CD8-positive, alpha-beta T cell (primary cell): ENCODE measurements at regions of chr17 and their contacts with region 1.

Region 1: GRCh38 chr17:59565171-59565969 is at the start of gene DHX40:
- DNase-seq: peak; percentile 86 to 99 (median 95)
- ATAC-seq: peak; percentile 89
- H3K4me3 ChIP-seq: peak within 1 kb of the TSS; percentile 94 to 100
- H3K4me3 Mint-ChIP-seq: peak within 1 kb of the TSS; percentile 100
- H3K27ac ChIP-seq: peak within 1 kb of the TSS; percentile 89 to 97
- H3K27ac Mint-ChIP-seq: peak within 1 kb of the TSS; percentile 100
- H3K4me1 ChIP-seq: peaks cover 17% of the 10 kb centered on the region
- H3K4me1 Mint-ChIP-seq: peaks cover 23% of the 10 kb centered on the region
- H3K27me3 ChIP-seq: no peaks in the 10 kb centered on the region
- H3K27me3 Mint-ChIP-seq: no peaks in the 10 kb centered on the region
- CTCF ChIP-seq: no peak
- total RNA-seq, gene DHX40: 72.7 to 72.8 TPM

Region 2: GRCh38 chr17:58631523-58632323 is 933.6 kb before region 1 on chr17:
- CTCF ChIA-PET with region 1: no interaction called
- POLR2A ChIA-PET with region 1: no interaction called
- intact Hi-C with region 1: loop called (anchors 5 to 10 kb)
- DNase-seq: peak; percentile 84 to 97 (median 91)
- ATAC-seq: peak; percentile 88
- H3K4me3 ChIP-seq: peak overlapping the region; percentile 48 to 50
- H3K4me3 Mint-ChIP-seq: no peak overlapping the region
- H3K27ac ChIP-seq: peak overlapping the region; percentile 95 to 97
- H3K27ac Mint-ChIP-seq: no peak overlapping the region
- H3K4me1 ChIP-seq: peaks cover 13% of the 10 kb centered on the region
- H3K4me1 Mint-ChIP-seq: peaks cover 2% of the 10 kb centered on the region
- H3K27me3 ChIP-seq: no peaks in the 10 kb centered on the region
- H3K27me3 Mint-ChIP-seq: no peaks in the 10 kb centered on the region
- CTCF ChIP-seq: no peak

Region 3: DNA sequence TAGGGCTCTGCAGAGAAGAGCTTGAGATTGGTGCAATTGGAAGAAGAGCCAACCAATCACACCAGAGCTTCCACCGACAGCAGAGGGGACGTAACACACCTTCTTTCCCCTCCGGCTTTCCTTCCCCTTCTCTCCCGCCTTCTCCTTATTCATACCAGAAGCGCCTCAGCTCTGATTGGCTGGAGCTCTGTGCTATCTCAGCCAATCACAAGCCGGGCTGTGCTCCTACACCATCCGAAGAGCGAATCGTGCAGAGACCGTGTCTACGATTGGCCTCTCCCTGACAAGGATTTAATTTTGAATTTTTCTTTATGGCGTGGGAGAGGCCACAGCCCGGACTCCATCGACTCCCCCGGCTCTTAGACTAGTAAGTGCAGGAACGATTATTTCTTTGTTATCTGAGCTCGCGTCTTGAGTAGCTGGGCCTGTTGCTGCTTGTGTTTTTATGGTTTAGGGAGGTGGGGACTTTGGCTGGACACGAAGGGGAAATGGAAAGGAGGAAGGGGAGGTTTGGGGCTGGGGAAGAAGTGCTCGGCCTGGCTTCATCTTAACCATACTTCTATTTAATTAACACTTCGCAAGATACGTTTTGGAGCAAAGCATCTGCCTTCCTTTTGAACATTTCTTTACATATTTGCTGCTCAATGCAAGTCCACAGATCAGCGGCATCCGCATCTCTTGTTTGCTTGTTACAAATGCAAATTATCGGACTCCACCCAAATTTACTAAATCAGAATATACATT is 409.8 kb before region 1 on chr17 and contains the start of gene PRR11:
- CTCF ChIA-PET with region 1: no interaction called
- POLR2A ChIA-PET with region 1: interaction called, 4 read pairs
- intact Hi-C with region 1: loop called in 1 of 2 experiments (anchors 5 kb)
- DNase-seq: peak; percentile 82 to 99 (median 90)
- ATAC-seq: peak; percentile 85
- H3K4me3 ChIP-seq: peak within 1 kb of the TSS; percentile 95 to 97
- H3K4me3 Mint-ChIP-seq: no peak within 1 kb of the TSS
- H3K27ac ChIP-seq: peak within 1 kb of the TSS; percentile 62 to 74
- H3K27ac Mint-ChIP-seq: no peak within 1 kb of the TSS
- H3K4me1 ChIP-seq: peaks cover 15% of the 10 kb centered on the region
- H3K4me1 Mint-ChIP-seq: peaks cover 28% of the 10 kb centered on the region
- H3K27me3 ChIP-seq: no peaks in the 10 kb centered on the region
- H3K27me3 Mint-ChIP-seq: no peaks in the 10 kb centered on the region
- CTCF ChIP-seq: no peak
- total RNA-seq, gene PRR11: 0.30 to 0.69 TPM

Region 4: GRCh38 chr17:59311130-59311920 is 254.0 kb before region 1 on chr17:
- CTCF ChIA-PET with region 1: no interaction called
- POLR2A ChIA-PET with region 1: no interaction called
- intact Hi-C with region 1: loop called in 1 of 2 experiments (anchors 5 kb)
- DNase-seq: peak in 6 of 9 experiments; percentile 16 to 77 (median 42)
- ATAC-seq: peak; percentile 99
- H3K4me3 ChIP-seq: no peak overlapping the region
- H3K4me3 Mint-ChIP-seq: no peak overlapping the region
- H3K27ac ChIP-seq: no peak overlapping the region
- H3K27ac Mint-ChIP-seq: no peak overlapping the region
- H3K4me1 ChIP-seq: no peaks in the 10 kb centered on the region
- H3K4me1 Mint-ChIP-seq: no peaks in the 10 kb centered on the region
- H3K27me3 ChIP-seq: no peaks in the 10 kb centered on the region
- H3K27me3 Mint-ChIP-seq: no peaks in the 10 kb centered on the region
- CTCF ChIP-seq: peak; percentile 76

Region 5: DNA sequence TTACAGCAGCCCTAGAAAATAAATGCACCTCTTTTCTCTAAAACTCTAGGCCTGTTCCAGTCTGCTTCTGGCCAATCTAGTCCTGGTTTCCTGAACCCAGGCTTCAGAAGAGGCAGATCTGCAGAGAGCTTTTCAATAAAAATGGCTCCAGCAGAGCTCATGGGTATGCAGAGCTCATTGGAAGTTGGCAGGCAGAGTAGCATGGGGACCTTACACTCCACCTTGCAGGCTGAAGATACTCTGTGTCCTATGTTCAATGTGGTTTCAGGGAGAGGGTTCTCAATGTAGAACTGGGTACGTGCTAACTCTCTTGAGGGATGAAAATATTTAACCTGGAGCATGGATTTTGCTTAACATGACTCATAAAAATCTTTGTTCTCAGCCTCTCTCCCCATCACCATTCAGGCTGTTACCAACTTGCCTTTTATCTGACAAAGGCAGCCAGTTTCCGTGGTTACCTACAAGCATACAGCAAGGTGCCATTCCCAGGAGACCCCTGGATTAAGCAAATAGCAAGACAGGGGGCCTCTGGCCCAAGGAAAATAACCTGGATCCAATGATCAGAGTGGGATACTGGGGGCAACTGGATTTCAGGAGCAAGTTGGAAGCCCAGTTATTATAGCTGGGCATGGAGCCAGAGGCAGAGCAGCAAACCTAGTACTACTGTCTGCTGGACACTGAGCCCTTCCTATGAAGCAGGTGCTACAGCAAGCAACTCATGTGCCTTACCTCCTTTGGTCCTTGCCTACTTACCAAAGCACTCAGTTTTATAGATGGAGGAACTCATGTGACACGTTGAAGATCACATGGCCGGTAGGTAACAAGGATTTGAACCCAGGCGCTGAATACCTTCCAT is 98.2 kb before region 1 on chr17:
- CTCF ChIA-PET with region 1: no interaction called
- POLR2A ChIA-PET with region 1: no interaction called
- intact Hi-C with region 1: no loop called
- DNase-seq: no peak
- ATAC-seq: no peak
- H3K4me3 ChIP-seq: no peak overlapping the region
- H3K4me3 Mint-ChIP-seq: no peak overlapping the region
- H3K27ac ChIP-seq: no peak overlapping the region
- H3K27ac Mint-ChIP-seq: no peak overlapping the region
- H3K4me1 ChIP-seq: peaks cover 6% of the 10 kb centered on the region
- H3K4me1 Mint-ChIP-seq: peaks cover 15% of the 10 kb centered on the region
- H3K27me3 ChIP-seq: no peaks in the 10 kb centered on the region
- H3K27me3 Mint-ChIP-seq: no peaks in the 10 kb centered on the region
- CTCF ChIP-seq: no peak

Region 6: GRCh38 chr17:59521204-59522126 is 43.9 kb before region 1 on chr17:
- CTCF ChIA-PET with region 1: interaction called, 4 read pairs
- POLR2A ChIA-PET with region 1: no interaction called
- intact Hi-C with region 1: loop called in 1 of 2 experiments (anchors 5 kb)
- DNase-seq: peak; percentile 22 to 76 (median 57)
- ATAC-seq: peak; percentile 74
- H3K4me3 ChIP-seq: no peak overlapping the region
- H3K4me3 Mint-ChIP-seq: no peak overlapping the region
- H3K27ac ChIP-seq: no peak overlapping the region
- H3K27ac Mint-ChIP-seq: no peak overlapping the region
- H3K4me1 ChIP-seq: no peaks in the 10 kb centered on the region
- H3K4me1 Mint-ChIP-seq: peaks cover 4% of the 10 kb centered on the region
- H3K27me3 ChIP-seq: no peaks in the 10 kb centered on the region
- H3K27me3 Mint-ChIP-seq: peaks cover 11% of the 10 kb centered on the region
- CTCF ChIP-seq: peak; percentile 94

Region 7: DNA sequence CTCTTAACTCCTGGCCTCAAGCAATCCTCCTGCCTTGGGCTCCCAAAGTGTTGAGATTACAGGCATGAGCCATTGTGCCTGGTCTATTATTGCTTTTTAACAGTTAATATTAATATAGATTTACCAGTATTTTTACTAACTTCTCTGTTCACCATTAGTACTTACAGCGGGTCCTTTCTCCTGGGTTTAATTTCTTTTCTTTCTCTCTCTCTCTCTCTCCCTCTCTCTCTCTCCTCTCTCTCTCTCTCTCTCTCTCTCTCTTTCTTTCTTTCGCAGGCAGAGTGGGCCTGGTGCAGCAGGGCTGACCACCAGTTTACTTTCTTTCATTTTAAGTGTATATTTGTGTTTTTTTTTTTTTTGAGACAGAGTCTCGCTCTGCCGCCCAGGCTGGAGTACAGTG is 14.7 kb before region 1 on chr17:
- CTCF ChIA-PET with region 1: no interaction called
- POLR2A ChIA-PET with region 1: no interaction called
- intact Hi-C with region 1: no loop called
- DNase-seq: no peak
- ATAC-seq: no peak
- H3K4me3 ChIP-seq: no peak overlapping the region
- H3K4me3 Mint-ChIP-seq: no peak overlapping the region
- H3K27ac ChIP-seq: no peak overlapping the region
- H3K27ac Mint-ChIP-seq: no peak overlapping the region
- H3K4me1 ChIP-seq: no peaks in the 10 kb centered on the region
- H3K4me1 Mint-ChIP-seq: no peaks in the 10 kb centered on the region
- H3K27me3 ChIP-seq: peaks cover 0 to 4% of the 10 kb centered on the region in 2 experiments
- H3K27me3 Mint-ChIP-seq: peaks cover 5% of the 10 kb centered on the region
- CTCF ChIP-seq: no peak

Region 8: DNA sequence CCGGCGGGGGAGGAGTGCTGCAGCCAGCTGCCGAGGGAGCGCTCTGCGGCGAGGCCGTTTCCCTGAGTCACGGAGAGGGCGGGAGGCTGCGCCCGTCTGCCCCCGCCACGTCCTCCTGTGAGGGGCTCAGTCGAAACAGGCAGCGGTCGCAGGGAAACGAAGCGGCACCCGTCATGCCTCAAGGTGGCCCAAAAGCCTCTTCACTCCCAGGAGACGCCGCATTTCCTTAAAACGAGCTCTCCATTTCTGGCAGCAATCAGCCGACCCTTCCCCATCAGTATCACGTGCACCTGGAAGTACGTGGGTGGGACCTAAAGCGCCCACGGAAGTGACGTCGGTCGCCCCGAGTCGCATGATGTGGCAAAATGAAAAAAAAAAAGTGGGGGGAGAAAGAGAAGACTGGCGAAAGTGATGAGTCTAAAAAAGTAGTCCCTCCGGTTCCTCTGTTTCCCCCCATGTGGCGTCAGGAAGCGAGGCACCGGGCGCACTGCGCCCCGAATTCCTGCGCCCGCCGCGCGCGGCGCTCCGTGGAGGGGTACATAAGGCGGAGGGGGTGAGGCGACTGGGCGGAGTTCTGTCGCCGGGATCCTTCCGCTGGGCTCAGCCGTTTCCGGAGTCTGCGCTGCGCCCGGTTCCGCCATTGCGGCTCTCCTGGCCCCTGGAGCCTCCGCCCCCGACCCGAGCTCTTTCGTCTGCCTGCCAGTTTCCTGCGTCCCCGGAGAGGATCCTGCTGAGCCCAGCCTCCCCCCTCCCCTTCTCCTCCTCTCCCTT is 54.1 kb after region 1 on chr17 and contains the start of gene CLTC:
- CTCF ChIA-PET with region 1: no interaction called
- POLR2A ChIA-PET with region 1: interaction called, 22 read pairs
- intact Hi-C with region 1: loop called (anchors 1 to 2 kb)
- DNase-seq: peak; percentile 83 to 98 (median 90)
- ATAC-seq: peak; percentile 82
- H3K4me3 ChIP-seq: peak within 1 kb of the TSS; percentile 98 to 99
- H3K4me3 Mint-ChIP-seq: peak within 1 kb of the TSS; percentile 96
- H3K27ac ChIP-seq: peak within 1 kb of the TSS; percentile 91 to 99
- H3K27ac Mint-ChIP-seq: peak within 1 kb of the TSS; percentile 98
- H3K4me1 ChIP-seq: peaks cover 37% of the 10 kb centered on the region
- H3K4me1 Mint-ChIP-seq: peaks cover 48% of the 10 kb centered on the region
- H3K27me3 ChIP-seq: no peaks in the 10 kb centered on the region
- H3K27me3 Mint-ChIP-seq: no peaks in the 10 kb centered on the region
- CTCF ChIP-seq: no peak
- total RNA-seq, gene CLTC: 73.4 to 86.0 TPM

Region 9: DNA sequence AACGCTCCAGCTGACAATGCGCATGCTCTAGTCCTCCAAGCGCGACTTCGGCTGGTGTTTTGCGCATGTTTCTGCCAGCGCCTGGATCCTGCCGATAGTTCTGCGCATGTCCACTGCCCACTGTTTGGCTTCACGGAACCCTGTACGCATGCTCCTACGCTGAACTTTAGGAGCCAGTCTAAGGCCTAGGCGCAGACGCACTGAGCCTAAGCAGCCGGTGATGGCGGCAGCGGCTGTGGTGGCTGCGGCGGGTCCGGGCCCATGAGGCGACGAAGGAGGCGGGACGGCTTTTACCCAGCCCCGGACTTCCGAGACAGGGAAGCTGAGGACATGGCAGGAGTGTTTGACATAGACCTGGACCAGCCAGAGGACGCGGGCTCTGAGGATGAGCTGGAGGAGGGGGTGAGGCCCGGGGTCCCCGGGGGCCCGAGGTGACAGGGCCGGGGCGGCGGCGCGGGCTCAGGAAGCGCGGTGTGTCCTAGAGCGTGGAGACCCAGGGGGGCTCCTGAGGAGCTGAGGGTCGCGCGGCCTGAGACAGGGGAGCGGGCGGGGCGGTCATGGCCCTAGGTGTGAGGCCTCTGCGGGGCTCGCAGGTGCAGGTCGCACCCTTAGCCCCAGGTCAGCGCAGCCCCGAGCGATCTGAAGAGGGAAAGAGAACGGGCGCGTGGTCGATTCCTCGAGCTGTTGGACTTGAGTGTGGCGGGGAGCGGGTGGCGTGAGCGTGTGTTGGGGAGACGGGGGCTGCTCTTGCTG is 327.7 kb after region 1 on chr17 and contains the starts of genes RPS6KB1 and TUBD1:
- CTCF ChIA-PET with region 1: no interaction called
- POLR2A ChIA-PET with region 1: no interaction called
- intact Hi-C with region 1: loop called (anchors 5 to 10 kb)
- DNase-seq: peak; percentile 94 to 100 (median 97)
- ATAC-seq: peak; percentile 91
- H3K4me3 ChIP-seq: peak within 1 kb of the TSS; percentile 66 to 82
- H3K4me3 Mint-ChIP-seq: peak within 1 kb of the TSS; percentile 100
- H3K27ac ChIP-seq: peak within 1 kb of the TSS; percentile 89 to 93
- H3K27ac Mint-ChIP-seq: peak within 1 kb of the TSS; percentile 100
- H3K4me1 ChIP-seq: peaks cover 37% of the 10 kb centered on the region
- H3K4me1 Mint-ChIP-seq: peaks cover 56% of the 10 kb centered on the region
- H3K27me3 ChIP-seq: no peaks in the 10 kb centered on the region
- H3K27me3 Mint-ChIP-seq: no peaks in the 10 kb centered on the region
- CTCF ChIP-seq: no peak
- total RNA-seq, gene RPS6KB1: 153 to 171 TPM
- total RNA-seq, gene TUBD1: 9.7 to 11.0 TPM